ENCODE measurements at regions of chr7 and their contacts with region 1.

Region 1: DNA sequence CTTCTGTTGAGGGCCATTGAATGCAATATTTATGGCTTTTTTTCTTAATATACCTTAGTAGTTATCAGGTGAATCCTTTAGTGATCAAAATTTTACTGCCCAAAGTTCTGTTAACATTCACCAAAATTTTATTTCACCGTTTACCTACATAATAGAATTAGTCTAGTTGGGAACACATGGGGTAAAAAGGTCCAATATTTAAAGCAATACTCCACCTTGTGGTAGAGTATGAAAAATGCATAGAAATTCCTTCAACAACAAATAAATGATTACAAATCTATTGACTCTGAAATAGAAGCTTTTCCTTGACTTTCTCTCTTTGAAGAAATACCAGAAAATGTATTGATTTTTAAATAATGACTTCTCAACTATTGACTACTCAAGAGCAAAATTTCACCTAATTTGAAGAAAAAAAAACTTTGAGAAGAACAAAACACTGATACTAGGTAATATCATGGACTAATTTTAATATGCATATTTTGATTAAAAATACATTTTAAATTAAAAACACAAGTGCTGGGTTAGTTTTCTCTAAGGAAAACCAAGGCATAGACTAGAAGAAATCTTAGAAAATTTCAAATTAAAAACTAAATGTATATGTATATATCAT is 43.3 kb downstream of the POLR1F start:
- DNase-seq: no peak
- H3K4me3 Mint-ChIP-seq: no peak overlapping the region
- H3K27ac Mint-ChIP-seq: no peak overlapping the region
- H3K4me1 Mint-ChIP-seq: peaks cover 2% of the 10 kb centered on the region
- H3K27me3 Mint-ChIP-seq: peaks cover 8% of the 10 kb centered on the region

Region 2: GRCh38 chr7:18352339-18353255 is 1312.9 kb before region 1 on chr7:
- intact Hi-C with region 1: loop called (anchors 2 kb)
- DNase-seq: peak; percentile 59
- H3K4me3 Mint-ChIP-seq: no peak overlapping the region
- H3K27ac Mint-ChIP-seq: no peak overlapping the region
- H3K4me1 Mint-ChIP-seq: peaks cover 3% of the 10 kb centered on the region
- H3K27me3 Mint-ChIP-seq: peaks cover 6% of the 10 kb centered on the region

Region 3: GRCh38 chr7:18590744-18591340 is 1074.7 kb before region 1 on chr7:
- intact Hi-C with region 1: loop called (anchors 5 kb)
- DNase-seq: no peak
- H3K4me3 Mint-ChIP-seq: no peak overlapping the region
- H3K27ac Mint-ChIP-seq: no peak overlapping the region
- H3K4me1 Mint-ChIP-seq: no peaks in the 10 kb centered on the region
- H3K27me3 Mint-ChIP-seq: peaks cover 2% of the 10 kb centered on the region